Activated CD8-positive, alpha-beta T cell treated with anti-CD3 and anti-CD28 coated beads for 36 hours (primary cell): ENCODE measurements at regions of chr11 and their contacts with region 1.

Region 1: DNA sequence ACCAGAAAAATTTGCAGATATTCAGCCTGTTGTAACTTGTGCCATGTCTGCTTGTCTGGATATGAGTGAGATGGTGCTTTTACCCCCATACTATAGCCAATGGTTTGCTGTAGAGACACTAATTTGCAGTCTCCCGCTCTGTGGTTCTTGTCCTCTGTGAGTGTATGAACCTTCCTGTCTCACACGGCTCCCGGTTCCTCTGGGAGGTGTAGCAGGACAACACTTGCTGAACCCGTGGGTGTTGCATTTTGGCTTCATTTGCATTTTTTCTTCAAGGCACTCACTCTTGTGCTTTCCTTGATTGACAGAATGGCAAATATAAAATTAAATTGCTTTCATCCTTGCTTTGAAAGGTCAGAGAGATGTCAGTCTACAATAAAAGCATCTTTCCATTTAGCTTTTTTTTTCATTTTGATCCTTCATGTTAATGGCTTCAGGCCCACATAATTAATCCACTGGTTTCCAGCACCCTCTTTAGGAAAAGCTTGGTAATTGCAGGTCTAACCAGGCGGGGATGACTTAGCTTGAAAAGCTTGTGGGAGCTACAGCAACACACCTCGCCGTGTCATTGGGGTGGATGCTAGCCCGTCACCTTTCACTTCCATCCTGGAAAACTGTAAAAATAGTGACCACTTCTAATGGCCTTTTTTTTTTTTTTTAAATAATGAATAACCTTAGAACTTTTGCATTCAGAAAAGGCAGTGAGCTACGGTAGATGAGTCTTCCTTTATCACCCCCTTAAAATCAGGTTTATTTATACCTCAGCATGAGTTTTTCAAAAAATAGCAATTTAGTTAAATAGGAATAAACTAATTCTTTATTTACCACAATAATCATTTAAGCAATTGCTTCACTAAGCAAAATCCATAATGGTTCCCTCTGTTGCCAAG is 27.4 kb upstream of the ST14 start:
- DNase-seq: peak; percentile 62
- ATAC-seq: peak; percentile 97
- H3K4me3 Mint-ChIP-seq: no peak overlapping the region
- H3K27ac Mint-ChIP-seq: no peak overlapping the region
- H3K4me1 Mint-ChIP-seq: no peaks in the 10 kb centered on the region
- H3K27me3 Mint-ChIP-seq: no peaks in the 10 kb centered on the region
- CTCF ChIP-seq: peak; percentile 79

Region 2: GRCh38 chr11:129881570-129882170 is 250.5 kb before region 1 on chr11:
- CTCF ChIA-PET with region 1: interaction called, 13 read pairs
- POLR2A ChIA-PET with region 1: no interaction called
- intact Hi-C with region 1: no loop called
- DNase-seq: peak; percentile 59
- ATAC-seq: peak; percentile 82
- H3K4me3 Mint-ChIP-seq: no peak overlapping the region
- H3K27ac Mint-ChIP-seq: no peak overlapping the region
- H3K4me1 Mint-ChIP-seq: no peaks in the 10 kb centered on the region
- H3K27me3 Mint-ChIP-seq: no peaks in the 10 kb centered on the region
- CTCF ChIP-seq: peak; percentile 61

Region 3: GRCh38 chr11:129922674-129923073 is 209.5 kb before region 1 on chr11:
- CTCF ChIA-PET with region 1: interaction called, 178 read pairs
- POLR2A ChIA-PET with region 1: interaction called, 3 read pairs
- intact Hi-C with region 1: loop called (anchors 2 kb)
- DNase-seq: no peak
- ATAC-seq: no peak
- H3K4me3 Mint-ChIP-seq: no peak overlapping the region
- H3K27ac Mint-ChIP-seq: no peak overlapping the region
- H3K4me1 Mint-ChIP-seq: peaks cover 6% of the 10 kb centered on the region
- H3K27me3 Mint-ChIP-seq: no peaks in the 10 kb centered on the region
- CTCF ChIP-seq: no peak

Region 4: GRCh38 chr11:129955282-129955681 is 176.9 kb before region 1 on chr11:
- CTCF ChIA-PET with region 1: interaction called, 10 read pairs
- POLR2A ChIA-PET with region 1: no interaction called
- intact Hi-C with region 1: no loop called
- DNase-seq: no peak
- ATAC-seq: no peak
- H3K4me3 Mint-ChIP-seq: no peak overlapping the region
- H3K27ac Mint-ChIP-seq: no peak overlapping the region
- H3K4me1 Mint-ChIP-seq: peaks cover 3% of the 10 kb centered on the region
- H3K27me3 Mint-ChIP-seq: no peaks in the 10 kb centered on the region
- CTCF ChIP-seq: no peak

Region 5: GRCh38 chr11:130002846-130003716 is 129.1 kb before region 1 on chr11:
- CTCF ChIA-PET with region 1: interaction called, 13 read pairs
- POLR2A ChIA-PET with region 1: interaction called, 4 read pairs
- intact Hi-C with region 1: loop called (anchors 5 kb)
- DNase-seq: peak; percentile 91
- ATAC-seq: peak; percentile 81
- H3K4me3 Mint-ChIP-seq: peak overlapping the region; percentile 86
- H3K27ac Mint-ChIP-seq: peak overlapping the region; percentile 100
- H3K4me1 Mint-ChIP-seq: peaks cover 31% of the 10 kb centered on the region
- H3K27me3 Mint-ChIP-seq: no peaks in the 10 kb centered on the region
- CTCF ChIP-seq: no peak

Region 6: DNA sequence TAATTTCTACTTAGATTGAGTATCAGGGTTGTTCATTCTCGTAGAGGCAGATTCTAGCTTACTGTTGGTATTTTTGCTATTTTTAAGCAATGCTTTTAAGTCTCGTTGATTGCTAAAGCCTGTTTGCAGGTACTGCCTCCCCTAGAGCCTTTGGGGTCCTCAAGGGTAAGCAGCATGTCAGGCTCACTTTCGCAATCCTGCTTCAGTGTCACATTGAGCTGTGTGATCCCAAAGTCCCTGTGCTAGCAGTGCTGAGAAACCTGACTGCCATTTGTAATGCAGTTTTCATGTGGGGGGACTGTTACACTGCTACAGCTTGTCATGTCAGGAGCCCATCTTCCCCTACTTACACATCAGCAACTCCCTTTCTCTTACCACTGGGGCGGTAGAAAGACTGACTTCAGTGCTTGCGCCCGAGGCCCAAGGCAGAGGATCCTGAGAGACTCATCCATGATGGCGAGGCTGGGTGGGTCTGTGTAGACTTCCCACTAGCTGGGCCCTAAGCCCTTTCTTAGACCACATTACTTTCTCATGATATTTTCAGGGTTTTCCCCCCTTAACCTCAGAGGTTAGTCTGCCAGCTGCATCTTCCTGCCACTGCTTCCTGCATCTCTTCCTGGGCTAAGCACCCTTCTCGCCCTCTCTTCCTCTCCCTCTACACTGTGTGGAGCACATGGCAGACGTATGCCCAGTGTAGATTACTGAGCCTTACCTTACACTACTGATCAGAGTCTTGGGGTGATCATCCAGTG is 13.4 kb before region 1 on chr11:
- CTCF ChIA-PET with region 1: interaction called, 17 read pairs
- POLR2A ChIA-PET with region 1: no interaction called
- intact Hi-C with region 1: no loop called
- DNase-seq: peak; percentile 64
- ATAC-seq: peak; percentile 77
- H3K4me3 Mint-ChIP-seq: no peak overlapping the region
- H3K27ac Mint-ChIP-seq: no peak overlapping the region
- H3K4me1 Mint-ChIP-seq: peaks cover 41% of the 10 kb centered on the region
- H3K27me3 Mint-ChIP-seq: peaks cover 7% of the 10 kb centered on the region
- CTCF ChIP-seq: no peak

Region 7: GRCh38 chr11:130202009-130202817 is 70.0 kb after region 1 on chr11:
- CTCF ChIA-PET with region 1: no interaction called
- POLR2A ChIA-PET with region 1: no interaction called
- intact Hi-C with region 1: no loop called
- DNase-seq: no peak
- ATAC-seq: no peak
- H3K4me3 Mint-ChIP-seq: no peak overlapping the region
- H3K27ac Mint-ChIP-seq: no peak overlapping the region
- H3K4me1 Mint-ChIP-seq: no peaks in the 10 kb centered on the region
- H3K27me3 Mint-ChIP-seq: no peaks in the 10 kb centered on the region
- CTCF ChIP-seq: no peak